ENCODE measurements at regions of chr14 and their contacts with region 1.

Region 1: DNA sequence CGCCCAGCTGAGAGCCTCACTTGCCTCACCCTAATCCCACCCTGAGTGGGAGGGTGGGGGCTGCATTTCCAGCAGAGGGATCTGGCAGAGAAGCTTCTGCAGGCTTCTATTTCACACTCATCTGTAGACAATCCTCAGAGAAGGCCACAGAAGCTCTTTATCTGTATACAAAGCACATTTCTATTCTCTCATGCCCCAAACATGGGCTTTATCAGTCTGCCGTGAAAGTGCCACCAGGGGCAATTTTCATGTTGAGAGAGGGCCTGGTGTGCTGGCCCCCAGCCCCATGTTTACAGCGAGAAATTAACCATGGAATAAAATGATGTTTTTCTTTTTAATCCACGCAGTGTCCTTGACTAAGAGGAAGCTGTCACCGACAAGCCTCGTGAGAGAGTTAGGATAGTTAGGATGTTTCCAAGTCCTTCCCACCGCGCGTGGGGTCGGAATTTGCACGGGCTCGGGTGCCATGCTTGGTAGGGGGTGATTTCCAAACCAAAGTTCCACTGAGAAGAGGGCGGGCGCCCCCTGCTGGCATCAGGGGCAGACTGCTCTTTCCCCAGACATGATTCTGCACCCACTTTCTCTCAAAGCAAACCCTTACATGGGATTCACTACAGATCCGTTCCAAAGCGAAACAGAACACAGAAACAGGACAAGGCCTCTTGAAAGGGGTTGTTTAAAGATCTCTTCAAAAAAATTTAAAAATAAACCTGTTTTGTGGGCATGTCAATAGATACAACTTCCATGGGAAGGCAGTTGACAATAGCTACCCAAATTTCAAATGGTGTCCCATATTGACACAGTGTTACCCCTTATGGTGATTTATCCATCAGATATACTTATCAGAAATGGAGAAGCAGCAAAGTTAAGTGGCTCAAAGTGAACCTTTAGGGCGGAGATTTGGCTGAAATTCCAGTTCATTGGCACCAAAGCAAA is 19.4 kb downstream of the BDKRB1 start:
- DNase-seq: peak; percentile 64 to 71 (median 69)
- ATAC-seq: peak; percentile 83
- H3K4me3 ChIP-seq: no peak overlapping the region
- H3K27ac ChIP-seq: no peak overlapping the region
- H3K4me1 ChIP-seq: no peaks in the 10 kb centered on the region
- H3K27me3 ChIP-seq: no peaks in the 10 kb centered on the region
- CTCF ChIP-seq: peak; percentile 78 to 87 (median 81)
- EP300 ChIP-seq: no peak
- POLR2A ChIP-seq: no peak
- RAD21 ChIP-seq: peak; percentile 75 to 79

Region 2: DNA sequence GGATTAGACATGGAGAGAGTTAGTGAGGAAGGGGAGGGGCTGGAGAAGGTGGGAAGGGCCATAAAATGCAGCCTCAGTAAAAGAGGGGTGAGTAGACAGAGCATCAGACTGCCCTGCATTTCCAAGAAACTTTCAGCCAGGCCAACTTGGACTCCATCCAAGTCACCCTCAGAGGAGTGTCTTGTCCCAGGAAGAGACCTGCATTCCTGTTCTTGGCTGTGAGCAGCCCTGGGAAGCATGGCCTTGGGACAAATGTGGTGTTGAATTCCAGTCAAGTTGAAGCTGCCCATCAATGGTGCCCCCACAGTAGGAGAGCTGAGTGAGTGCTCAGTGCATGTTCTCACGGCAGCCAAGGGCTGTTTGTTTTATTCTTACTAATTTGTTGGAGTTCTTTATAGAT is 433.8 kb before region 1 on chr14:
- CTCF ChIA-PET with region 1: no interaction called
- POLR2A ChIA-PET with region 1: no interaction called
- in situ Hi-C with region 1: no loop called
- intact Hi-C with region 1: no loop called
- DNase-seq: no peak
- ATAC-seq: no peak
- H3K4me3 ChIP-seq: no peak overlapping the region
- H3K27ac ChIP-seq: no peak overlapping the region
- H3K4me1 ChIP-seq: no peaks in the 10 kb centered on the region
- H3K27me3 ChIP-seq: no peaks in the 10 kb centered on the region
- CTCF ChIP-seq: no peak
- EP300 ChIP-seq: no peak
- POLR2A ChIP-seq: no peak
- RAD21 ChIP-seq: no peak

Region 3: DNA sequence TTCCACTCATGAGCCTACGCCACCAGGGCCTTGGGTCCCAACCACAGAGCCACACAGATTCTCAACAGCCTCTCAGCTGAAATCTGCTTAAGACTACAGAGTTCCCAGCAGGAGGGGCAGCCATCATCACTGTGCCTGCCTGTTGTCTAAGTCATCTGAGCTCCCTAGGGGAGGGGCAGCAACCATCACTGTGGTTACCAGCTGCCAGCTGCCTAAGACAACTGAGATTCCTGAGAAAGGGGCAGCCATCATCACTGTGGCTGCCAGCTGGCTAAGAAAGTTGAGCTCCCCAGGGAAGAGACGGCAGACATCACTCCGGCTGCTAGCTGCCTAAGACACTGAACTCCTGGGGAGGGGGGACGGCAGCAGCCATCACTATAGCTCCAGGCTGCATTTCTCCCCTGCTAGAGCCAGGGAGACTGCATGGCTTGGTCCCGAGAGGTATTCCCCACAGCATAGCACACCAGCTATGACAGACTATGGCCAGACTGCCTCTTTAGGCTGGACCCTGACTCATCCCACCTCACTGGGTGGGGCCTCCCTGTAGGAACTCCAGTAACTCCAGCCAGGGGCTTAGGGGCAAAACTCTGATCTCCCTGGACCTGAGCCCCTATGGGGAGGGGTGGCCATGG is 273.5 kb before region 1 on chr14:
- CTCF ChIA-PET with region 1: no interaction called
- POLR2A ChIA-PET with region 1: no interaction called
- in situ Hi-C with region 1: no loop called
- intact Hi-C with region 1: loop called (anchors 10 kb)
- DNase-seq: no peak
- ATAC-seq: no peak
- H3K4me3 ChIP-seq: no peak overlapping the region
- H3K27ac ChIP-seq: no peak overlapping the region
- H3K4me1 ChIP-seq: no peaks in the 10 kb centered on the region
- H3K27me3 ChIP-seq: no peaks in the 10 kb centered on the region
- CTCF ChIP-seq: no peak
- EP300 ChIP-seq: no peak
- POLR2A ChIP-seq: no peak
- RAD21 ChIP-seq: no peak

Region 4: DNA sequence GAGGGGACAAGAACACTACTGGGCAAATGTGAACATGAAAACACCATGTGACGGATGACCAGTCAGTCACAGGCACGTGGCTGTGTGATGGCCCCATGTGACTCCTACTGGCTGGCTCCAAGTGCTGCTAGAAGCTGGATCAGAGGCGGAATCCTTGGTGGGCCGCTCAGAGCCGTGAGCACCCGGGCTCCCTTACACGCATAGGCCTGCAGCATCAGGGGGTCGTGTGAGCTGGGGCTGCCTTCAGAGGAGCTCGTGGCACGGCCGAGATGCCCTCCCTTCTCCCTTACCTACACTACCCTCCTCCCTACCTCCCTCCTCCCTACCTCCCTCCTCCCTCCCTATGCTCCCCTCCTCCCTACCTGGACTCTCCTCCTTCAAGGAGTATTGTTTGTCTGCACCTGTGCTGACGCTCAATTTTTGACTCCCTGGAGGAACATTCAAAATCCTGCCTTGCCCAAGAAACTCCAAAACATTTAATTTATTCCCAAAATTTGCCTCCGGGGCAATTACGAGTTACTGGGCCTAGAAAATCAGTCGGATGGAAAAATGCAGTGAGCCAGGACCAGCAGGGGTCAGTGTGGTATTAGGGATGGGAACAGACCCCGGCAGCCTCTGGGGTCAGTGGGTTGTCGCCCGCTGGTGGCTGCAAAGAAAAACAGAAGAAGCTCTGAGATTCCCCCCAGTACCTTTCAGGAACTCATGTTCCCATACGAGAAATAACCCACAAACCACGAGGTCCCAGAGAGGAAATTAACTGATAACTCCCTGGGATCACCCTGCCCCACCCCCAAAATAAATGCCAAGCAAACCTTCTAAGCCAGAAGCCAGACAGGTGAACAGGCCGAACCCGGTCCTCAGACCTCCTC is 175.1 kb before region 1 on chr14:
- CTCF ChIA-PET with region 1: interaction called, 17 read pairs
- POLR2A ChIA-PET with region 1: no interaction called
- in situ Hi-C with region 1: loop called (anchors 5 kb)
- intact Hi-C with region 1: loop called (anchors 1 kb)
- DNase-seq: peak; percentile 70 to 75 (median 75)
- ATAC-seq: peak; percentile 93
- H3K4me3 ChIP-seq: no peak overlapping the region
- H3K27ac ChIP-seq: no peak overlapping the region
- H3K4me1 ChIP-seq: peaks cover 0 to 3% of the 10 kb centered on the region in 2 experiments; a peak in 1 of 5 replicates
- H3K27me3 ChIP-seq: peaks cover 0 to 7% of the 10 kb centered on the region in 2 experiments; a peak in 1 of 5 replicates
- CTCF ChIP-seq: peak; percentile 89 to 99 (median 99)
- EP300 ChIP-seq: no peak
- POLR2A ChIP-seq: no peak
- RAD21 ChIP-seq: peak; percentile 87 to 89

Region 5: DNA sequence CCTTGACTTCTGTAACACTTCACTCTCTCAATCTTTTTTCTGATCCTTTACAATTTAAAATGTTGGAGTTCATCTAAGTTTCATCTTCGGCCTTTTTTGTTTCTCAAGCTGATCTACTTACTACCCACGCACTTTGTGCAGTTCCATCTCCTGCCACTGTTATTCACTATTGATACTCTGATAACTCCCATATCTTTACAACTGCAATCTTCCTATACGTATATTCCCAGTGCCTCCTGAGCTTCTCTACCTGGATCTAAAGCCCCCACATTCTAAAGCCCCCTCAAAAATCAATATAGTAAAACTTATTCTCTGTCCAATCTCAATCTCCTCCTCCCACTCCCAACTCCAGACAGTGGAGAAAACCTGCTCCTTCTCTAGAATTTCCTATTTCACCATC is 81.8 kb after region 1 on chr14:
- CTCF ChIA-PET with region 1: no interaction called
- POLR2A ChIA-PET with region 1: no interaction called
- in situ Hi-C with region 1: no loop called
- intact Hi-C with region 1: no loop called
- DNase-seq: peak in 1 of 4 experiments; percentile 25
- ATAC-seq: peak; percentile 43
- H3K4me3 ChIP-seq: no peak overlapping the region
- H3K27ac ChIP-seq: peak overlapping the region; percentile 70; the same call in 2 of the 3 replicates
- H3K4me1 ChIP-seq: peaks cover 3 to 32% of the 10 kb centered on the region in 2 experiments; a peak in 3 of 5 replicates
- H3K27me3 ChIP-seq: no peaks in the 10 kb centered on the region
- CTCF ChIP-seq: peak in 2 of 3 experiments; percentile 10 to 23; a peak in 1 of 6 replicates
- EP300 ChIP-seq: no peak
- POLR2A ChIP-seq: no peak
- RAD21 ChIP-seq: no peak

Region 6: GRCh38 chr14:96424109-96424989 is 148.9 kb after region 1 on chr14:
- CTCF ChIA-PET with region 1: no interaction called
- POLR2A ChIA-PET with region 1: no interaction called
- in situ Hi-C with region 1: no loop called
- intact Hi-C with region 1: loop called (anchors 1 kb)
- DNase-seq: peak; percentile 32 to 67 (median 36)
- ATAC-seq: peak; percentile 89
- H3K4me3 ChIP-seq: peak overlapping the region; percentile 30
- H3K27ac ChIP-seq: no peak overlapping the region
- H3K4me1 ChIP-seq: peaks cover 0 to 8% of the 10 kb centered on the region in 2 experiments; a peak in 2 of 5 replicates
- H3K27me3 ChIP-seq: no peaks in the 10 kb centered on the region
- CTCF ChIP-seq: peak; percentile 57 to 77 (median 65)
- EP300 ChIP-seq: no peak
- POLR2A ChIP-seq: no peak
- RAD21 ChIP-seq: peak; percentile 86 to 90

Region 7: GRCh38 chr14:96567289-96567899 is 291.9 kb after region 1 on chr14:
- CTCF ChIA-PET with region 1: no interaction called
- POLR2A ChIA-PET with region 1: no interaction called
- in situ Hi-C with region 1: no loop called
- intact Hi-C with region 1: no loop called
- DNase-seq: peak in 1 of 4 experiments; percentile 40
- ATAC-seq: peak; percentile 95
- H3K4me3 ChIP-seq: no peak overlapping the region
- H3K27ac ChIP-seq: no peak overlapping the region
- H3K4me1 ChIP-seq: no peaks in the 10 kb centered on the region
- H3K27me3 ChIP-seq: no peaks in the 10 kb centered on the region
- CTCF ChIP-seq: peak; percentile 36 to 75 (median 57); a peak in 5 of 6 replicates
- EP300 ChIP-seq: no peak
- POLR2A ChIP-seq: no peak
- RAD21 ChIP-seq: peak; percentile 56 to 76

Measured in K562 (cell line).